ENCODE measurements at regions of chr17 and their contacts with region 1.

Region 1: GRCh38 chr17:68924786-68925720 is 30.1 kb downstream of the ABCA8 start:
- DNase-seq: no peak
- H3K4me3 ChIP-seq: no peak overlapping the region
- H3K27ac ChIP-seq: no peak overlapping the region
- H3K4me1 ChIP-seq: peaks cover 0 to 5% (median 0%) of the 10 kb centered on the region in 4 experiments; a peak in 1 of 7 replicates
- H3K27me3 ChIP-seq: peaks cover 0 to 1% (median 0%) of the 10 kb centered on the region in 4 experiments; a peak in 1 of 7 replicates
- CTCF ChIP-seq: no peak
- EP300 ChIP-seq: no peak
- POLR2A ChIP-seq: no peak
- RAD21 ChIP-seq: no peak

Region 2: DNA sequence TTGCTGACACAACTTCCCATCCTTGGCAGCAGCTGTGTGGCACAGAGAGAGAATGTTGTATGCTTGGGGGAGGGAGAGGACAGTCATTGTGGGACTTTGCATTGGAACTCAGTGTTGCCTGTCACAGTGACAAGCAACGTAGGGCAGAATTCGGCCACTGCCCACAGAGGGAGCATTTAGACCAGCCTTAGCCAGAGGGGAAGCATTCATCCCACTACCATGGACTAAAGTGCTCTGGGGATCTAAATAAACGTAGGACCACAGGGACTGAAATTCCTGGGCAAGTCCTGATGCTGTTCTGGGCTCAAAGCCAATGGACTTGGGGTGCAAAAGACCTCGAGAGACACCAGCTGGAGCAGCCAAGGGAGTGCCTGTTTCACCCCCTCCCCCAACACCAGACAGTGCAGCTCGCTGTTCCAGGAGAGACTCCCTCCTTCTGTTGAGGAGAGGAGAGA is 14.8 kb before region 1 on chr17:
- CTCF ChIA-PET with region 1: interaction called, 26 read pairs
- POLR2A ChIA-PET with region 1: no interaction called
- DNase-seq: no peak
- H3K4me3 ChIP-seq: no peak overlapping the region
- H3K27ac ChIP-seq: no peak overlapping the region
- H3K4me1 ChIP-seq: no peaks in the 10 kb centered on the region
- H3K27me3 ChIP-seq: no peaks in the 10 kb centered on the region
- CTCF ChIP-seq: peak in 1 of 3 experiments; percentile 3; a peak in 1 of 4 replicates
- EP300 ChIP-seq: no peak
- POLR2A ChIP-seq: no peak
- RAD21 ChIP-seq: peak; percentile 15 to 32; a peak in 3 of 4 replicates

Region 3: GRCh38 chr17:69084911-69085310 is 159.9 kb after region 1 on chr17:
- CTCF ChIA-PET with region 1: no interaction called
- POLR2A ChIA-PET with region 1: no interaction called
- DNase-seq: peak; percentile 70 to 73
- H3K4me3 ChIP-seq: no peak overlapping the region
- H3K27ac ChIP-seq: no peak overlapping the region
- H3K4me1 ChIP-seq: no peaks in the 10 kb centered on the region
- H3K27me3 ChIP-seq: no peaks in the 10 kb centered on the region
- CTCF ChIP-seq: peak; percentile 61 to 77 (median 72)
- EP300 ChIP-seq: no peak
- POLR2A ChIP-seq: no peak
- RAD21 ChIP-seq: peak; percentile 44 to 53

Measured in H1 (cell line).